Dendritic cell treated with granulocyte-macrophage colony-stimulating factor and Interleukin-4, amounts not matched to agents 40 ng/mL and 50 ng/mL, for 4 days (primary cell): ENCODE measurements at regions of chrX and their contacts with region 1.

Region 1: GRCh38 chrX:75045369-75045768 is 110.7 kb downstream of the ABCB7 start:
- H3K4me3 Mint-ChIP-seq: no peak overlapping the region
- H3K27ac Mint-ChIP-seq: no peak overlapping the region
- H3K4me1 Mint-ChIP-seq: no peaks in the 10 kb centered on the region
- H3K27me3 Mint-ChIP-seq: no peaks in the 10 kb centered on the region

Region 2: DNA sequence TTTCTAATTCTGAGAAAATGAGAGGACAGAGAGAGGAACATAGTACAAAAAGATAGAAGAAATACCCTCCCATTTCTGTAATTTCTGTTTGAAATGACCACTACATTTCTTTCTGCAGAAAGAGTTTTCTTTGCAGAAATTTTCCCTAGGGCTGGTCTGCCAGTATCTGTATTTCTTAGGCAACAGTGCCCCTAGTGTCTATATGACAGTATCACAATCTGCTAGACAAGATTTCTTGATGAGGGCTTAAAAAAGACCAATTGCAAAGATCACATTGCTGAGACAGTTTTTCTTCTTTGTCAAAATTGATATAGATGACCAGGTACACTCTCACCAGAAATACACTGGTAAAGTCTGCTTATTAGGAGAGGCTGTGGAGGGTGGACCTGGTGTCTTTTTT is 558.5 kb after region 1 on chrX:
- intact Hi-C with region 1: loop called (anchors 10 kb)
- H3K4me3 Mint-ChIP-seq: no peak overlapping the region
- H3K27ac Mint-ChIP-seq: no peak overlapping the region
- H3K4me1 Mint-ChIP-seq: no peaks in the 10 kb centered on the region
- H3K27me3 Mint-ChIP-seq: no peaks in the 10 kb centered on the region